Activated CD8-positive, alpha-beta T cell treated with anti-CD3 and anti-CD28 coated beads, Interleukin-2, amount 10 ng/mL, durations not matched to agents 7 days and 5 days (primary cell): ENCODE measurements at regions of chr5 and their contacts with region 1.

Region 1: GRCh38 chr5:54944364-54944763 is 41.0 kb downstream of the ESM1 start:
- DNase-seq: peak; percentile 65
- ATAC-seq: peak; percentile 67
- H3K4me3 Mint-ChIP-seq: no peak overlapping the region
- H3K27ac Mint-ChIP-seq: no peak overlapping the region
- H3K4me1 Mint-ChIP-seq: peaks cover 18% of the 10 kb centered on the region
- H3K27me3 Mint-ChIP-seq: peaks cover 10% of the 10 kb centered on the region

Region 2: GRCh38 chr5:54743997-54744788 is 200.2 kb before region 1 on chr5:
- CTCF ChIA-PET with region 1: no interaction called
- POLR2A ChIA-PET with region 1: no interaction called
- DNase-seq: peak; percentile 67
- ATAC-seq: peak; percentile 83
- H3K4me3 Mint-ChIP-seq: peak overlapping the region; percentile 39
- H3K27ac Mint-ChIP-seq: peak overlapping the region; percentile 81
- H3K4me1 Mint-ChIP-seq: peaks cover 31% of the 10 kb centered on the region
- H3K27me3 Mint-ChIP-seq: peaks cover 4% of the 10 kb centered on the region

Region 3: DNA sequence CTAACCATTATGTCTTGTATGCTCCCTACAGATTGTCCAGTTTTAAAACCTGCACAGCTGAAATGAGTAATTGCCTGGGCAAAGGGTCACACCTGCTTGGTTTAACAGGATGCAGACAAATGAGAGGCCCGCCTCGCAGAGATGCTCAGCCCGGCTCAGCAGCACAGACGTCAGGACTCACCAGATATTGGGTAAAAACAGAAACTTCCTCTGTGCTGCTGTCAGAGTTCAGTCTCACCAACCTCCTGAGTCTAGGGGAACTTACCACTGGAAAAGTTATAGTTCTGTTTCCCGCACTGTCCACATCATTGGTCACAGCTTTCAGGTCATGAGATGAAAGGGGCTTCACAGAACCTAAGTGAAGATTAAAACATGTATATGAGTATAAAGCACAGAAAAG is 111.5 kb before region 1 on chr5:
- CTCF ChIA-PET with region 1: no interaction called
- POLR2A ChIA-PET with region 1: no interaction called
- DNase-seq: no peak
- ATAC-seq: no peak
- H3K4me3 Mint-ChIP-seq: no peak overlapping the region
- H3K27ac Mint-ChIP-seq: no peak overlapping the region
- H3K4me1 Mint-ChIP-seq: no peaks in the 10 kb centered on the region
- H3K27me3 Mint-ChIP-seq: peaks cover 22% of the 10 kb centered on the region

Region 4: GRCh38 chr5:54905943-54906537 is 38.3 kb before region 1 on chr5:
- CTCF ChIA-PET with region 1: interaction called, 124 read pairs
- POLR2A ChIA-PET with region 1: no interaction called
- DNase-seq: peak; percentile 86
- ATAC-seq: no peak
- H3K4me3 Mint-ChIP-seq: no peak overlapping the region
- H3K27ac Mint-ChIP-seq: no peak overlapping the region
- H3K4me1 Mint-ChIP-seq: peaks cover 64% of the 10 kb centered on the region
- H3K27me3 Mint-ChIP-seq: peaks cover 24% of the 10 kb centered on the region

Region 5: DNA sequence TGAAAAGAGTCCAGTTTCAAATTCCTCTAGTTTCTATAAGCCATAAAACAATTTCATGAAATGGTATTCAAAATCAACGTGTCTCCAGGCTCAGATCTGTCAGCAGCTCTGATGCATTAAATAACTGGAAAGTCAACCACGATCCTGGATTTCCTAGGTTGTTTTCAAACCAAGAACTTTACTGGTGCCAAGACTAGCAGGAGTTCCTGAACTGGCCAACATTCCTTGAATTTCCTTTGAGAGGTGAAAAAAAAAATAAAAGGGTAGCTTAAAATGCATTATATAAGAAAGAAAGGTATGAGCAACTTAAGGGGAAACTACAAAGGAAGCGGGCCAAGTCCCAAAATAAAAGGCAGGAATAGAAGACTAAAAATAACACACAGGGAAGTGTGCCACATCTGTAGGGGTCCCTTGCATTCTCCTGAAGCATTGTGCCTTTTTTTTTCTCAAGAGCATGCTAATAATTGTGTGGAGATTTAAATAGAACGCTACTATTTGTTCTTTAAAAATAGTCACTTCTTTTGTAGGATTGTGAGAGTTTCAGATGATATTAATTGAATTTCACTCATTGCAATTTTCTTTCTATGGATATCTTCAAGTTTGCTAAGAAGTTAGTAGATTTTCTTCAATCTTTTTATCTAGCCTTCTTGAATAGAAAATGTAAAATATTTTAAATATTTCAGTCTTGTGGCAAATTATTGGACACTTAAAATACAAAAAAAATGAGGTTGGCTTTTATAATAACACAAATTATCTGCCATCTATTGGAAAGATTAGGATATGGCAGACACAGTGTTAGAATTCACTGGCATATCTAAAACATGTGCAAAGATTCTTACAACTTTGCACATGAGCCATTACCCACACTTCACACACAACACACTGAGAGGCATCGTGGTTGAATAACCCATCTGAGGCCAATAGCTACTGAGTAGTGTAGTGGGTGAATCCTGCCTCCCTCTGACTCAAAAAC is 25.8 kb after region 1 on chr5:
- CTCF ChIA-PET with region 1: interaction called, 26 read pairs
- POLR2A ChIA-PET with region 1: no interaction called
- DNase-seq: no peak
- ATAC-seq: no peak
- H3K4me3 Mint-ChIP-seq: no peak overlapping the region
- H3K27ac Mint-ChIP-seq: no peak overlapping the region
- H3K4me1 Mint-ChIP-seq: peaks cover under 1% of the 10 kb centered on the region
- H3K27me3 Mint-ChIP-seq: peaks cover 17% of the 10 kb centered on the region

Region 6: GRCh38 chr5:55021410-55021809 is 77.0 kb after region 1 on chr5:
- CTCF ChIA-PET with region 1: interaction called, 47 read pairs
- POLR2A ChIA-PET with region 1: no interaction called
- DNase-seq: no peak
- ATAC-seq: no peak
- H3K4me3 Mint-ChIP-seq: no peak overlapping the region
- H3K27ac Mint-ChIP-seq: no peak overlapping the region
- H3K4me1 Mint-ChIP-seq: peaks cover 56% of the 10 kb centered on the region
- H3K27me3 Mint-ChIP-seq: no peaks in the 10 kb centered on the region

Region 7: DNA sequence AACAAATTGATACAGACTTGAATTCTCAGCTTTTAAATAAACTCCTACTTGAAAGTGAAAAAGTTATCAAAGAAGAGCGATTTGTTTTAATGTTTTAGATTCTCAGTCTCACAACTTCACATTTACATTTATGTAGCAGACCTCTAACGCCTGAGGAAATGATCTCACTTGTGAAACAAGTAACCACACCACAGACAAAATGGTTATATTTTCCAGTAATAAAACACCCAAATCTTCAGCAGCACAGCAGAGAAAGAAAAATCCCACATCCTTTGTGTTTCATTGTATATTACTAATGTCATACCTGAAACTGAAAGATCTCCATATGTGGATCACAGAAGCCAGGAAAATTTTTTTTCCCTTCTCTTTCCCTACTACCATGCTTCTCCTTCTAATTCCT is 128.3 kb after region 1 on chr5:
- CTCF ChIA-PET with region 1: interaction called, 20 read pairs
- POLR2A ChIA-PET with region 1: no interaction called
- DNase-seq: peak; percentile 36
- ATAC-seq: peak; percentile 90
- H3K4me3 Mint-ChIP-seq: peak overlapping the region; percentile 60
- H3K27ac Mint-ChIP-seq: peak overlapping the region; percentile 87
- H3K4me1 Mint-ChIP-seq: peaks cover 60% of the 10 kb centered on the region
- H3K27me3 Mint-ChIP-seq: no peaks in the 10 kb centered on the region

Region 8: DNA sequence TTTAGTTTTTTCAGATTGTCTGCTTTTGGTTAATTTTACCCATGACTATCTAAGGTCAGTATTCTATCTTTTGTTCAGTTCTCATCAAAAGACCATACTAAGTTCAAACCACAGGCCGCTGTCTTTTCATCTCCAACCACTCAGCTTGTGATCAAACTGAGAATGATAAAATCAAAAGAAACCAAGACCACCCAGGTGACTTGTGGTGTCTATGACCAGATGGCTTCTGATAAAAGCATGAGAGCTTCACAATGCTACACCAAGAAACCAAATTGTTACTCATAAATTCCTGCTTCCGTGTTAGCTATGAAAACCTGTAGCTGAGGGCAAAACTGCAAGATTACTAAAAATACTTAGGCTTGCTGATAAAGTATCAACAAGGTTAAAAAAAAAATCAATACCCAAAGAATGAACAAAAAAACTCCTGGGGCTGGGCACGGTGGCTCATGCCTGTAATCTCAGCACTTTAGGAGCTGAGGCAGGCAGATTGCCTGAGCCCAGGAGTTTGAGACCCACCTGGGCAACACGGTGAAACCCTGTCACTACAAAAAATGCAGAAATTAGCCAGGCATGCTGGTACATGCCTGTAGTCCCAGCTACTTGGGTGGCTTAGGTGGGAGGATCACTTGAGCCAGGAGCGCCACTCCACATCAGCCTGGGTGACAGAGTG is 189.8 kb after region 1 on chr5:
- CTCF ChIA-PET with region 1: interaction called, 15 read pairs
- POLR2A ChIA-PET with region 1: no interaction called
- DNase-seq: peak; percentile 85
- ATAC-seq: peak; percentile 93
- H3K4me3 Mint-ChIP-seq: peak overlapping the region; percentile 56
- H3K27ac Mint-ChIP-seq: peak overlapping the region; percentile 84
- H3K4me1 Mint-ChIP-seq: peaks cover 49% of the 10 kb centered on the region
- H3K27me3 Mint-ChIP-seq: peaks cover 13% of the 10 kb centered on the region